ENCODE measurements at regions of chr17 and their contacts with region 1.

Region 1: GRCh38 chr17:9676742-9677387 is 31.5 kb downstream of the USP43 start:
- DNase-seq: no peak
- H3K4me3 ChIP-seq: no peak overlapping the region
- H3K27ac ChIP-seq: no peak overlapping the region
- H3K4me1 ChIP-seq: no peaks in the 10 kb centered on the region
- H3K27me3 ChIP-seq: no peaks in the 10 kb centered on the region
- CTCF ChIP-seq: no peak

Region 2: DNA sequence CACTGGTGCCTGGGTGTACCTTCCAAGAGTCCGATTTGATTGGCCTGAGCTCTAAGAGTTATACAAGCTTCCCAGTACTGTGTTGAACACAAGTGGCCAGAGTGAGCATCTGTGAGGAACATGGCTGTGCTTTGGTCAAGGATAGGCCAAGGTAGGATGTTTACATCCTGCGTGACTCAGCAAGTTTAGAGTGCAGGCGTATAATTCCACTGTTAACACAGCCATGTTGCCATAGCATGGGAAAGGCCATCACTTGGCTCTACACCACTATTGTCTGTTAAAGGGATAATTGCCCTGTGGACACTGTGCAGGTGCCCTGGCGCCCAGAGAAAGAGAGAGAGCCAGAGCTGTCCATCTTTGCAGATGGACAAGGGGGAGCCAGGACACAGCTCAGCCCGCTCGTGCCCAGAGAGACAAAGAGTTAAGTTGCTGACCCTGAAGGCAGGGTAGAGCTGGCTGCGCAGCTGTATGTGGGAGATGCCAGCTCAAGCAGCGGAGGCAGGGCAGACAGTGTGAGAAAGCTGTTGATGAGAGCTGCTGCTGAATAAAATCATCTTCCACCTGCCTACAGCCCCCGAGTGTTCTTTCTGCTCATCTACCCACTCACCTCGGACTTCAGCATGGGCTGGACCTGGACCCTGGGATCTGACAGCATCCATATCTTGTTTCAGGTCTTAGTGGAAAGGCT is 88.8 kb before region 1 on chr17:
- intact Hi-C with region 1: loop called (anchors 10 kb)
- DNase-seq: no peak
- H3K4me3 ChIP-seq: no peak overlapping the region
- H3K27ac ChIP-seq: no peak overlapping the region
- H3K4me1 ChIP-seq: no peaks in the 10 kb centered on the region
- H3K27me3 ChIP-seq: no peaks in the 10 kb centered on the region
- CTCF ChIP-seq: no peak

Region 3: GRCh38 chr17:9628509-9628908 is 48.4 kb before region 1 on chr17:
- intact Hi-C with region 1: loop called (anchors 5 kb)
- DNase-seq: peak; percentile 24
- H3K4me3 ChIP-seq: no peak overlapping the region
- H3K27ac ChIP-seq: no peak overlapping the region
- H3K4me1 ChIP-seq: no peaks in the 10 kb centered on the region
- H3K27me3 ChIP-seq: no peaks in the 10 kb centered on the region
- CTCF ChIP-seq: peak; percentile 15